Activated CD8-positive, alpha-beta T cell treated with anti-CD3 and anti-CD28 coated beads for 36 hours (primary cell): ENCODE measurements at regions of chr2 and their contacts with region 1.

Region 1: DNA sequence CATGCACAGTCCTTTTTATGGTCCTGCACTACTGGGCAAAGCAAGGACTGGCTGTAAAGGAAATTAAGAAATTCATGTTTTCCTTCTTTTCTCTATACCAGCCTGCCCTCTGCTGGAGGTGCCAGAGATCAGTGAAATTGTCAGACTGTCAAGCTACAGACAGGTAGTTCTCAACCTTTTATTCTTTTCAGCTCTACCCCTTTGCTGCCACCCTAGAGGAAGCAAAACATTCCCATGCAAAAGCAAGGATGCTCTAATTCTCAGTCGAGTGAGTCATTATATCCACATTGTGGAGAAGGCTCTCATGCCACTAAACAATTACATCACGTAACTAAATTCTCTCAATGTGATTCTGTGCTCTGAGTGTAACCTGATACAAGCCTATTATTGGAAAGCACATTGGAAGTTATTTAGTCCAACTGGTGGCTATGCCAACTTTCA is 25.0 kb upstream of the RAPGEF4 start:
- DNase-seq: peak; percentile 58
- ATAC-seq: no peak
- H3K4me3 Mint-ChIP-seq: no peak overlapping the region
- H3K27ac Mint-ChIP-seq: no peak overlapping the region
- H3K4me1 Mint-ChIP-seq: no peaks in the 10 kb centered on the region
- H3K27me3 Mint-ChIP-seq: peaks cover 2% of the 10 kb centered on the region
- CTCF ChIP-seq: peak; percentile 87

Region 2: DNA sequence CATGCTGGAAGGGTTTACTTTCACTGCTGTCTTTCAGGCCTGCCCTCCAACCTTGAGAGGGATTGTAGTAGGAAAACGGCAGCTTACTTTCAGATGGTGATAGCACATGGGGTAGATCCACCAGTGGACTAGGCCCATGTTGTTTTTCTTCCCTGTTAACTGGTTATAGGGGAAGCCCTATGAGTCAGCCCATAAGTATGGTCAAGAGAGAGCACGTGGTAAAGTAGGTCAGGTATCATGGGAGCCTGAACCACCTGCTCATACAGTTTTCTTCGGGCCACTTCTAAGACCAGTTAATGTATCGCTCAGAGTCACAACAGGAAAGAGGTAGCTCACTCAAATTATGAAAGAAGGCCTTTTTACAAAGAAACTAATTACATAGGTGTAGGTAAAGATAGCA is 121.7 kb before region 1 on chr2:
- CTCF ChIA-PET with region 1: interaction called, 19 read pairs
- POLR2A ChIA-PET with region 1: no interaction called
- intact Hi-C with region 1: no loop called
- DNase-seq: no peak
- ATAC-seq: no peak
- H3K4me3 Mint-ChIP-seq: no peak overlapping the region
- H3K27ac Mint-ChIP-seq: no peak overlapping the region
- H3K4me1 Mint-ChIP-seq: peaks cover 47% of the 10 kb centered on the region
- H3K27me3 Mint-ChIP-seq: no peaks in the 10 kb centered on the region
- CTCF ChIP-seq: no peak

Region 3: GRCh38 chr2:172606285-172606684 is 104.3 kb before region 1 on chr2:
- CTCF ChIA-PET with region 1: no interaction called
- POLR2A ChIA-PET with region 1: no interaction called
- intact Hi-C with region 1: loop called (anchors 10 kb)
- DNase-seq: no peak
- ATAC-seq: no peak
- H3K4me3 Mint-ChIP-seq: no peak overlapping the region
- H3K27ac Mint-ChIP-seq: no peak overlapping the region
- H3K4me1 Mint-ChIP-seq: no peaks in the 10 kb centered on the region
- H3K27me3 Mint-ChIP-seq: no peaks in the 10 kb centered on the region
- CTCF ChIP-seq: no peak

Region 4: DNA sequence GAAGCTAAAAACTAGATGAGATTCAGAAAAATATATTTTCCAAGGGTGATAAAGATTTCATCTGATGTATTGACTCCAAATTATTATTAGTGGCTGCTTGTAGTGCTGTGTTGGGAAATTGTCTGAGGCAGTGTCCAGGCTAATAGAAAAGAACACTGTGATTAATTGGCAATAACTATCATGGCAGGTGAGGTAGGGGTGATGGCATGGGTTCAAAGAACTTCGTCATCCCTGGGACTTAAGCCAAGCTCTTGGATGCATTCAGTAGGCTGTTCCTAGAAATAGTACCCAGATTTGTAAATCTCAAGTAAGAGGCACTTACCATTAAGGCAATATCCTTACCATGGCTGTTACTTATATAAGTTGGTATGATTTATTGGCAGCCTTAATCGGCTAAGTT is 11.9 kb after region 1 on chr2:
- CTCF ChIA-PET with region 1: interaction called, 15 read pairs
- POLR2A ChIA-PET with region 1: no interaction called
- intact Hi-C with region 1: no loop called
- DNase-seq: no peak
- ATAC-seq: no peak
- H3K4me3 Mint-ChIP-seq: no peak overlapping the region
- H3K27ac Mint-ChIP-seq: no peak overlapping the region
- H3K4me1 Mint-ChIP-seq: no peaks in the 10 kb centered on the region
- H3K27me3 Mint-ChIP-seq: peaks cover 3% of the 10 kb centered on the region
- CTCF ChIP-seq: no peak